Upper lobe of right lung (tissue), 1 donor: ENCODE measurements at regions of chr9 and their contacts with region 1.

Region 1: DNA sequence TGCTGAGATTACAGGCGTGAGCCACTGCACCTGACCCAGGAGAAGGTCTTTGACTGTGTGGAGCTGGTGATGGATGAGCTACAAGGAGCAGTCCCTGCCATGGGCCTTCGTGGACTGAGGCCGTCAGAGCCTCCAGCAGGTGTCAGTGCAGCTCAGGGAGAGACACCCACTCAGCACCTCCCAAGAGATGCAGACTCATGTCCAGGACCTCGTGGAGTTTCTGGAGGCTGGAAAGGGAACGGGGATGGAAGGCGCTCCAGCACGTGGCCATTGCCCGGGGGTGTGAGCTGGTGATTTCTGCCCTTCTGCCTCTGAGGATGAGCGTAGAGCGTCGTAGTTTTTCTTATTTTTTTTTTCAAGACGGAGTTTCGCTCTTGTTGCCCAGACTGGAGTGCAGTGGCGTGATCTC is 9.5 kb downstream of the TOR4A start:
- DNase-seq: peak; percentile 68
- ATAC-seq: peak; percentile 95
- H3K4me3 ChIP-seq: no peak overlapping the region
- H3K27ac ChIP-seq: no peak overlapping the region
- H3K4me1 ChIP-seq: no peaks in the 10 kb centered on the region
- H3K27me3 ChIP-seq: no peaks in the 10 kb centered on the region
- CTCF ChIP-seq: peak; percentile 50

Region 2: GRCh38 chr9:137521405-137521985 is 234.5 kb after region 1 on chr9:
- intact Hi-C with region 1: loop called (anchors 10 kb)
- DNase-seq: no peak
- ATAC-seq: peak; percentile 26
- H3K4me3 ChIP-seq: no peak overlapping the region
- H3K27ac ChIP-seq: no peak overlapping the region
- H3K4me1 ChIP-seq: no peaks in the 10 kb centered on the region
- H3K27me3 ChIP-seq: no peaks in the 10 kb centered on the region
- CTCF ChIP-seq: no peak